ENCODE measurements at regions of chr5 and their contacts with region 1.

Region 1: DNA sequence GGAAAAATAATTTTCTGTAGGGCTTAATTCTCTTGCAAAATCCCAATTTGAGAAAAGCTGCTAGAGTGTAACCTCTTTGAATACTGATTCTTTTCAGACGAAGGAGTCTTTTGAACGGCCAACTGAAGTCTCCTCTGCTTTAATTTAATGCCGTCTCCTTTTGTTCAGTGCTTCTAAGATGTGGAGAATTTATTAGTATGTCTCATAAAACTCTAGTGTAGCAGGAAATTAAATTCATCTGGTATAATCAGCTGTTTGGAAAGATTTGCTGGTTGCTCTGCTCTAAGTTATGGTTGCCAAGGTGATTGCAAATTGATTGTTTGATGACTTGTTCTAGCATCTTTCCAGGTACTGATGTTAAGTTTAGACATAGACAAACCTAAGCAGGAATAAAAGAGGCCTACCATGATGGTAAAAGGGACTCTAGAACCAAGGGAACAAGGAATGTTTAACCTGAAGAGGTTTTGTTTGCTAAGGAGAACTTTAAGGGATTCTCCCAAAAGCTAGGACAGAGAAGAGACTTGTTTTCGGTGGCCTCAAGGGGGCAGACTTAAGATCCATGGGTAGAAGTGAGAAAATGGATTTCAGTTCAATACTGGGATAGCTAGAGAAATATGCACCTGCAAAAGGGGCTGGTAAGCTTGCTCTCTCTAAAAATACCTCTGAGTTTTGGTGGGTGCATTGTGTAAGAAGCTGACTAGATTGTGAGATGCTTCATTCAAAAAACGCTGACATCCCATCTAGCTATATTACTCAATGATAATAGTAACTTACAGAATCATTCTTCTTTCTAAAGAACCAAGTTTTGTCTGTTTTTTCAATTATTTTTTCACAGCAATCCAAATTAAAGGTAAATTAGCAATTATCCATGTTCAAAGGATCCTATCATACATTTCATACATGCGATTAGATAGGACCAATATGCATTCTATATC is 5.7 kb upstream of the ADRB2 start:
- DNase-seq: no peak
- H3K4me3 ChIP-seq: no peak overlapping the region
- H3K27ac ChIP-seq: no peak overlapping the region
- H3K4me1 ChIP-seq: peaks cover 6 to 13% (median 10%) of the 10 kb centered on the region in 4 donors
- H3K27me3 ChIP-seq: no peaks in the 10 kb centered on the region
- CTCF ChIP-seq: peak; percentile 32 to 61 (median 33)
- EP300 ChIP-seq: no peak
- POLR2A ChIP-seq: no peak

Region 2: DNA sequence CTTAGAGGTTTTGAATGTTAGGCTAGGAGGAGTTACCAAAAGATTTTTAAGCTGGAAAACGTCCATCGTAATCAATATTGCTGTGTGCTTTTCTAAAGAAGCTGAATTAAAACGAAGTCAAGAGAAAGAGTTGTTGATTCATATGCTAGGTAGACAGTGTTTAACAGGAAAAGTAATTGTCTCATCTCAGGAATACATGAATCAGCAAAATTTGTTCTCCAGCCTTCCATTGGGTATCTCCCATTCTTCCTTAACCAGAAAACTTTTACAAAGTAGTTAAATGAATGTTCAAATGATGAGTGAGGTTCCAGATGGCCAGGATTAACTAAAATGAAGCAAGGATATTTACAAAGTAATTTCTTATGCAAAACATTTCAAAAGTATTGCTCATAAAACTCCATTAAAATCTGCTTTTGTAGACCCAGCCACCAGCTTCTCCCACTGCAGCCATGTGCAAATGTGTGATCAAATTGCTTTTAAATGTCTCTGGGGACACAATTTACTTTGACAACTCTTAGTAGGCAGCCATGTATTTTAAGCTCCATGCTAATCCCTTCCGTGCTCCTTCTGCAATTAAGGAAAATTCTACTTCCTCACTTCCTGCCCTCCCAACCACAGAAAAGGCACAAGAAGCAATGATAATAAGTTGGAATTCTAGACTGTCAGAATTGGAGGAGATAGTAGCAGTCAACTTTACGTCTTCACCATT is 287.6 kb before region 1 on chr5:
- intact Hi-C with region 1: no loop called
- DNase-seq: no peak
- H3K4me3 ChIP-seq: no peak overlapping the region
- H3K27ac ChIP-seq: no peak overlapping the region
- H3K4me1 ChIP-seq: no peaks in the 10 kb centered on the region
- H3K27me3 ChIP-seq: peaks cover 0 to 3% (median 0%) of the 10 kb centered on the region in 4 donors
- CTCF ChIP-seq: no peak
- EP300 ChIP-seq: no peak
- POLR2A ChIP-seq: no peak

Region 3: GRCh38 chr5:148739524-148739923 is 81.2 kb before region 1 on chr5:
- intact Hi-C with region 1: loop called (anchors 5 kb)
- DNase-seq: no peak
- H3K4me3 ChIP-seq: no peak overlapping the region
- H3K27ac ChIP-seq: no peak overlapping the region
- H3K4me1 ChIP-seq: peaks cover 14 to 21% (median 19%) of the 10 kb centered on the region in 4 donors
- H3K27me3 ChIP-seq: no peaks in the 10 kb centered on the region
- CTCF ChIP-seq: no peak
- EP300 ChIP-seq: no peak
- POLR2A ChIP-seq: no peak

Region 4: GRCh38 chr5:148957591-148958202 is 137.0 kb after region 1 on chr5:
- intact Hi-C with region 1: loop called (anchors 5 kb)
- DNase-seq: no peak
- H3K4me3 ChIP-seq: no peak overlapping the region
- H3K27ac ChIP-seq: no peak overlapping the region
- H3K4me1 ChIP-seq: no peaks in the 10 kb centered on the region
- H3K27me3 ChIP-seq: no peaks in the 10 kb centered on the region
- CTCF ChIP-seq: peak; percentile 56 to 80 (median 57)
- EP300 ChIP-seq: no peak
- POLR2A ChIP-seq: no peak

Measured in esophagus muscularis mucosa (tissue), 4 donors.